Thyroid gland (tissue), 4 donors: ENCODE measurements at regions of chr14 and their contacts with region 1.

Region 1: GRCh38 chr14:24241829-24242443 is 487 bp downstream of the TINF2 start:
- DNase-seq: peak; percentile 95
- H3K4me3 ChIP-seq: peak overlapping the region; percentile 19 to 77 (median 65)
- H3K27ac ChIP-seq: peak overlapping the region; percentile 92 to 98 (median 96)
- H3K4me1 ChIP-seq: peaks cover 18 to 32% of the 10 kb centered on the region in 2 donors
- H3K27me3 ChIP-seq: no peaks in the 10 kb centered on the region
- CTCF ChIP-seq: peak in 4 of 6 experiments; percentile 38 to 60 (median 54)
- POLR2A ChIP-seq: no peak

Region 2: DNA sequence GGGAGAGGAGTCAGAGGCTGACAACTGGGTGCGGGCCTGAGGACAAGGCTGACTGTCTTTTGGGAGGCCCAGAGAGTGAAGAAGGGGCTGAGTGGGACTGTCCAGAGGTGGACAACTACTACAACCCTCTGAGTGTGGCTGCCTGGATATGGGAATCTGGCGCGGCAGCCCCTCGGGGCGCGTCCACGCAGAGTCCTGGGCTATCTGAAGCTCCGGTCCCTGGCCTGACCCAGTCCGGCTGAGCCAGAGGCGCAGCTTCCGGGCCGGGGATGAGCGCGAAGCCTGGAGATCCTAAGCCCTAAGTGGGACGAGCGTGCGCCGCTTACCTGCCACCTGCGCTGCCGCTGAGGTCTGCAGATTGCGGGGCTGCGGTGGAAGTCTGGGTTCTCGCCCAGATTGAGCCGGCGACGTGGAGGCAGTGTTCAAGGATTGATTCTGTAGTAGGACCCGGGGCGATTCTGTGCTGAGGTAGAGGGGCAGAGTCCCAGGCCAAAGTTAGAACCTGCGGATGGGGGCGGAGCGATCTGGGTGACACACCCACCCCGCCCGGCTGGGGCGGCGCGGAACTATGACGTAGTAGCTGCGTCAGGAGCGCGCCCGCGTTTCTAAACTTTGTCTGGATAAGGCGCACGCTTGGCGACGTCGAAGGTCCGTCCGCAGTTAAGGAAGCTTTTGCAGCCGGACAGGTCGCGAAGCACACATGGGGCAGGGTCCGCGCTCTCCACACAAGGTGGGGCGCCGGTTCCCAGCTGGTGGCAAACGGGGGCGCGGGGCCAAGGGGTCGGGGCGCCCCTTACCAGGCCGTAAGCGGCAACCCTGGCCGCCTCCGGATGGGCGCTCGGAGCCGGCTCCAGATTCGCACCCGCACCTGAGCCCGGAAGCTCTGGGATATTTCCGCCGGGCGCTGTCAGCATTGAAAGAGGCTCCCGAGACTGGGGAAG is 57.6 kb after region 1 on chr14 and contains the starts of genes DHRS1 and NOP9:
- intact Hi-C with region 1: loop called (anchors 2 kb)
- DNase-seq: peak; percentile 89 to 90
- H3K4me3 ChIP-seq: peak within 1 kb of the TSS; percentile 48 to 71 (median 68)
- H3K27ac ChIP-seq: peak within 1 kb of the TSS in 2 of 3 donors; percentile 31 to 54
- H3K4me1 ChIP-seq: peaks cover 15 to 17% of the 10 kb centered on the region in 2 donors
- H3K27me3 ChIP-seq: no peaks in the 10 kb centered on the region
- CTCF ChIP-seq: no peak
- POLR2A ChIP-seq: peak in 1 of 2 donors; percentile 71
- total RNA-seq, gene DHRS1: 35.2 to 59.3 (median 38.3) TPM
- total RNA-seq, gene NOP9: 16.4 to 22.3 (median 20.7) TPM